Pancreas (tissue), 10 donors: ENCODE measurements at regions of chr9 and their contacts with region 1.

Region 1: DNA sequence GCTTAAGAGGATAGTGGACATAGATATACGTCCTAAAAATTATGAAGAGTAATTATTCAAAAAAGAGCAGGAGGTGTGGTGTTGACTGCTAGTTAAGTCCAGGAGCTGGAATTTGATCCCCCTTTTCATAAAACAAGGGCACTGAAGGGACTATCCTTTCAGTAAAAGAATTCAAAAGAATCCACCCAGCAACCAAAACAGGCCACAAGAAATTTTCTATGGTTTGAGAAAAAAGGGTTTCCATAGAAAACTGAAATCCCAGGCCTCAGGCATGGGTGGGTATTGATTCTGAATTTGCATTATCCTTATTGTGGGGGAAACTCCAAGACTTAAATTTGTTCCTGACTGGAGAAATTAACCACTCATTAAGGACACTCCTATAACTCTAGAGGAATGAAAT is 269.0 kb upstream of the MPDZ start:
- DNase-seq: no peak
- ATAC-seq: no peak
- H3K4me3 ChIP-seq: no peak overlapping the region
- H3K27ac ChIP-seq: no peak overlapping the region
- H3K4me1 ChIP-seq: no peaks in the 10 kb centered on the region
- H3K27me3 ChIP-seq: no peaks in the 10 kb centered on the region
- CTCF ChIP-seq: no peak

Region 2: GRCh38 chr9:13070612-13071595 is 477.6 kb before region 1 on chr9:
- intact Hi-C with region 1: no loop called
- DNase-seq: no peak
- ATAC-seq: no peak
- H3K4me3 ChIP-seq: no peak overlapping the region
- H3K27ac ChIP-seq: no peak overlapping the region
- H3K4me1 ChIP-seq: no peaks in the 10 kb centered on the region
- H3K27me3 ChIP-seq: no peaks in the 10 kb centered on the region
- CTCF ChIP-seq: no peak

Region 3: DNA sequence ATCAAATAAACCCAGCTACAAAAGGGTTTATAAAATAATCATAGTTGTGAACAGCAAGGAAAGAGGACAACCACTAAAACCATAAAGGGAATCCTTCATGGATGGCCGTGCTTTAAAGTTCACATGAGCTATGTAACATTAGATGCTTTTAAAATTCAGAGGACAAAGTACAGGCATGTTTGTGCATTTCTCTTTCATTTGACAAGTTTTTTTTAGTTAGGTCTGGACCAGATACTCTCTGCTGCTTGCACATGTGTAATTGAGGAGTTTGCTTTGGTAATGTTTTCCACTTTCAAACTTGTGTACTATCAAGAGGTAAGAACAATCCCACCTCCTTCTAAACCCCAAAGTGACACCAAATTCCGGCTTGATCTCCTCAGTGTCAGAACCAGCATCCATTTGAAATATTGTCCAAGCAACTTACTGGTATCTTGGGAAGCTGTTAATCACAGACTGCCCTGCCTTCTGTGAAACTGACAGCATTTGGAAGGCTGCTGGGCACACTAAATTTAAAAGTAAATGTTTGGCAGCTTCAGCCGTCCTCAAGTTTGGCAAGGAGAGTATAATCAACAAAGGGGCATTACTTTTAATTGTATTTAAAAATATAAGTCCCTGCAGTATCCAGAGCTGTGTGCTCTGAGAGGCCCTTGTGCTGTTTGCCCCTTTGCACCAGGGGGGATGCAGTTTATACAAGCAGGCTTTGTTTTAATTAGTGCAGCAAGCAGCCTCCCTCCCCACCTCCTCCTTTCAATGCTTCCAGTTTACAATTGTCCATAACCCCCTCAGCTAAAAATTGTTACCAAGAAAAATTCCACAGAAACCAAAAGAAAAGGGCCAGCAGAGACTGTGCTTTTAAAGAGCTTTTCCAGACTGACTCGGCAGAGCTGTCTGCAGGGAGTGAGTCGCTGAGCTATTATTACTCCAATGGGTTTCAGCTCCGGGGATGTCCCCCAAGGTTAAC is 59.2 kb after region 1 on chr9:
- intact Hi-C with region 1: loop called in 1 of 3 experiments (anchors 10 kb)
- DNase-seq: no peak
- ATAC-seq: peak in 1 of 4 donors; percentile 25
- H3K4me3 ChIP-seq: no peak overlapping the region
- H3K27ac ChIP-seq: no peak overlapping the region
- H3K4me1 ChIP-seq: peaks cover 0 to 10% (median 0%) of the 10 kb centered on the region in 3 donors
- H3K27me3 ChIP-seq: no peaks in the 10 kb centered on the region
- CTCF ChIP-seq: no peak